PC-9 (cell line): ENCODE measurements at regions of chr10 and their contacts with region 1.

Region 1: DNA sequence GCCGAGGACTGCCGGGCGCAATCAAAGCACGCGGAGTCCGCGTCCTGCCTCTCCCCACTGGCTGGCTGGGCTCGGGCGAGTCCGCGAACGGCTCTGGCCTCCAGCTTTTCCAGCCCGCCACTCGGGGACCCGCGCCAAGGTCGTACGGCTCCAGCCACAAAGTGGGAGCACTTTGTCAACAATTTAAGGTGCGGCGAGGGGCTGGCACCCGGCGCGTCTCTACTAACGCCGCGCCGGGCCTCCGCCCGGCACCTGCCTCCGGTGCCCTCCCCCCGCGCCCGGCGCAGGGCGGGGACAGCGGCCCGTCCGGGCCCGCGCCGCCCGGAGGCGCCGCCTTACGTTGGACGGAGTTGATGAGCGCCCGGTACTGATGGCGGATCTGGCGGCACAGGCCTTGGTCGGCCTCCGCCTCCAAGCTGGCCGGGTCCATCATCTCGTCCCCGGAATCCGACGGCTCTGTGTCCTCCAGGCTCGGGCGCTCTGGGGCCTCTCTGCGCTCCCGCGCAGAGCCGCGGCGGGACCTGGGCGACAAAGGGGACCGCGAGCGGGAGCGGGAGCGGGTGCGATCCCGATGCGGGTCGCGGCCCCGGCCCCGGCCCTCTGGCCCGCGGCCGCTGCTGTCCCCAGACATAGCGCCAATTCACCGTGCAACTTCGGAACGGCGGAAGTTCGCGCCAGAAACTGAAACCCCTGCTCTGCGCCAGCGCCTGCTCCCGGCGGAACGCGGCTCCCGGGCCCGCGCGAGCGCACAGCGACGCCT is at the start of gene NSMCE4A:
- DNase-seq: peak; percentile 44 to 63
- H3K4me3 ChIP-seq: peak within 1 kb of the TSS; percentile 83
- H3K27ac ChIP-seq: peak within 1 kb of the TSS; percentile 77
- H3K4me1 ChIP-seq: peaks cover 6% of the 10 kb centered on the region
- H3K27me3 ChIP-seq: no peaks in the 10 kb centered on the region
- CTCF ChIP-seq: no peak; the same call in 1 of the 2 replicates
- total RNA-seq, gene NSMCE4A: 26.8 and 32.4 TPM in 2 replicates

Region 2: GRCh38 chr10:121516093-121516865 is 458.4 kb before region 1 on chr10:
- CTCF ChIA-PET with region 1: no interaction called
- POLR2A ChIA-PET with region 1: no interaction called
- intact Hi-C with region 1: no loop called
- DNase-seq: no peak
- H3K4me3 ChIP-seq: no peak overlapping the region
- H3K27ac ChIP-seq: no peak overlapping the region
- H3K4me1 ChIP-seq: no peaks in the 10 kb centered on the region
- H3K27me3 ChIP-seq: peaks cover 68% of the 10 kb centered on the region
- CTCF ChIP-seq: no peak

Region 3: GRCh38 chr10:121927841-121928527 is 46.7 kb before region 1 on chr10 and contains the start of gene ATE1:
- CTCF ChIA-PET with region 1: no interaction called
- POLR2A ChIA-PET with region 1: no interaction called
- intact Hi-C with region 1: loop called (anchors 2 kb)
- DNase-seq: peak; percentile 59 to 76
- H3K4me3 ChIP-seq: peak within 1 kb of the TSS; percentile 73
- H3K27ac ChIP-seq: peak within 1 kb of the TSS; percentile 82
- H3K4me1 ChIP-seq: 0 out of 2 replicates have a peak, but pooled peaks cover 5% of the 10 kb centered on the region
- H3K27me3 ChIP-seq: no peaks in the 10 kb centered on the region
- CTCF ChIP-seq: no peak
- total RNA-seq, gene ATE1: 12.2 and 14.8 TPM in 2 replicates

Region 4: DNA sequence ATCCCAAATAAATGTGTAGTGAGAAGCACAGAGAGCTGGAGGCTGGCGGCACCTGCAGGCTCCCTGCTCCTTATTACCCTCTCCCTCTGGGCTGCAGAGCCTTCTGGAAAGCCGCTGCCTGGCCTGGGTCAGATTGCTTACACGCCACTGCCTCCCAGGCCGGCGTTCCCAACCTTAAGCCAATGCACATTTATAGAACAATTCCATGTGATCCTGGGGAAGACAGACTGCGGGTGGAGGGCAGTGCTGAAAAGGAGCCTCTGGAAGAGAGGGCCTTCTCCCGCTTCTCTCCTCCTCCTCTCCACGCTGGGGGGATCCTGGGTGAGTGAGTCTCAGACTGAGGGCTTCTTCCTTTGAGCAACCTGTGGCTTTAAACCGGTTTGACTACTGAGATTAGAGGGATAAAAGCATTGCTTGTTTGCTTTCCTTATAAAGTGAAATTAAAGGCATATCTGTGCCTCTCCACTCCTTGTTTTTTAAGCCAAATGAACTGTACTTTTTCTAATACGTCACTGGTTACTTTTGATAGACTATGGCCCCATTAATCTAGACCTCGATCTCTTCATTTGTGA is 19.8 kb after region 1 on chr10:
- CTCF ChIA-PET with region 1: interaction called, 3 read pairs
- POLR2A ChIA-PET with region 1: no interaction called
- intact Hi-C with region 1: loop called (anchors 2 kb)
- DNase-seq: peak; percentile 35 to 82
- H3K4me3 ChIP-seq: peak overlapping the region; percentile 32; the same call in 1 of the 2 replicates
- H3K27ac ChIP-seq: peak overlapping the region; percentile 72
- H3K4me1 ChIP-seq: peaks cover 36% of the 10 kb centered on the region
- H3K27me3 ChIP-seq: no peaks in the 10 kb centered on the region
- CTCF ChIP-seq: no peak

Region 5: DNA sequence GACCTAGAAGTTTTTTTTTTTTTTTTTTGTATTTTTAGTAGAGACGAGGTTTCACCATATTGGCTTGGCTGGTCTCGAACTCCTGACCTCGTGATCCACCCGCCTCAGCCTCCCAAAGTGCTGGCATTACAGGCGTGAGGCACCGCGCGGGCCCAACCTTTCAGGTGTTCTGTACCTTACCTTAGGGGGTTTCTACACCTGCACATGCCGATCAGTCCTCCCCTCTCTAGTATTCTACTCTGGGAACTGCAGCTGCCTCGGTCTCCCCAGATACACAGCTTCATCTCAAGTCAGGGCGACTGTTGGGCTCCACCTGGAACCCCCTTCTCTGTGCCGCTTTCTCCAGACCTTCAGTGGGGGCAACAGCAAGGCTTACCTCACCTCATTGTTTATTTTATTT is 94.1 kb after region 1 on chr10:
- CTCF ChIA-PET with region 1: no interaction called
- POLR2A ChIA-PET with region 1: no interaction called
- intact Hi-C with region 1: no loop called
- DNase-seq: no peak
- H3K4me3 ChIP-seq: no peak overlapping the region
- H3K27ac ChIP-seq: no peak overlapping the region
- H3K4me1 ChIP-seq: peaks cover 7% of the 10 kb centered on the region; the same call in 1 of the 2 replicates
- H3K27me3 ChIP-seq: no peaks in the 10 kb centered on the region
- CTCF ChIP-seq: no peak

Region 6: DNA sequence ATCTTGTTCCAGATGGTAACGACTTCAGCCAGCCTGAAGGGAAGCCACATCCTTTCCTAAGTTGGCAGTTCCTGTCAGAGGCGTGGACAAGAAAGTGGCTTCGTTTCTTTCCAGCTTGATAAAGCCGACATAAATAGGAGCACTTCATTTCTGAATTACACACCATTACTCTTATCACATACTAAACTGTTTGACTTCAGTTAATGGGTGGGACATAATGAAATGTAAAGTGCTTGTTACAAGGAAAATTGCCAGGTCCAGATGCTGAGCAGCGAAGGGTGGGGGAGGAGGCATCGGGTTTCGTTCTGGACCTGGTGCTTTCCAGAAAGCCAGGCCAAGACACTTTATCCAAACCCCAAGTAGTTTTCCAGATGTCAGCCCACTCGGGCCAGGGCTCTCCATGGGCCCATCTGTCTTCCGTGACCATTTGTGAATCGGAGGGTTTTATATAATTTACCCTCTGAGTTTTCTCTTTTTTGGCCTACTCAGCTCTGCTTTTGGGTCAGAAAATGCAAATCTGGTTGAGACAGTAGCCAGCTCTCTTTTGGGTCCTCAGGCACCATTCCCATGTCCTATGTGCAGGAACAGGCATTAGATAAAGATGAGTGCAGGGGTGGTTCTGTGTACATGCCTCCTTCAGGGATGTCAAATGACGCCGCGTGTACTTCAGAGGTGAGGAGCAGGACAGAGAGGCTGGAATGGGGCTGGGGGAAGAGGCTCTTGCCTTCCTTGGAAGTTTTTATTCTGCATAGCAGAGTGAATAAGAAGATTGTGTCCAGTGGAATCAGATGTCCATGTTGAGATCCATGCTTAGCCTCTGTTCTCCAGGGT is 104.5 kb after region 1 on chr10:
- CTCF ChIA-PET with region 1: no interaction called
- POLR2A ChIA-PET with region 1: no interaction called
- intact Hi-C with region 1: no loop called
- DNase-seq: no peak
- H3K4me3 ChIP-seq: no peak overlapping the region
- H3K27ac ChIP-seq: no peak overlapping the region
- H3K4me1 ChIP-seq: no peaks in the 10 kb centered on the region
- H3K27me3 ChIP-seq: no peaks in the 10 kb centered on the region
- CTCF ChIP-seq: no peak

Region 7: DNA sequence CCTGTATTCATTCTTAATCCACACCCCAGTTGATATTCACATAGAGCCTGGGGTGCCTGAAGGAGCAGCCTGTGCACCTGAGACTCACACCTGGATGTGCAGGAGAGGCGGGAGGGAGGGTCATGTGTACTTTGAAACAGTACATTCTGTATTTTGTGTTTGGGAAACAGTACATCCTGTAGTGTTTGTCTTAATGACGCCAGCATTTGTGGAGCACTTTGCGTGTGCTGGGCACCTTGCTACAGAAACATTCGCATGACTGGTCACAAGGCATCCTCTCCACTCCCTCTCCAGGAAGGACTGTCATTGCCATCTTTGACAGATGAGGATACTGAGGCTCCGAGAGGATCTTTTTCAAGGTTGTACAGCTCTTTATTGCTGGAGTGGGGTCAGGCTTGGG is 146.3 kb after region 1 on chr10:
- CTCF ChIA-PET with region 1: no interaction called
- POLR2A ChIA-PET with region 1: no interaction called
- intact Hi-C with region 1: no loop called
- DNase-seq: no peak
- H3K4me3 ChIP-seq: no peak overlapping the region
- H3K27ac ChIP-seq: no peak overlapping the region
- H3K4me1 ChIP-seq: no peaks in the 10 kb centered on the region
- H3K27me3 ChIP-seq: no peaks in the 10 kb centered on the region
- CTCF ChIP-seq: no peak